ENCODE measurements at regions of chr3 and their contacts with region 1.

Region 1: GRCh38 chr3:169420429-169420828 is 243.1 kb downstream of the MECOM start:
- DNase-seq: no peak
- H3K4me3 ChIP-seq: no peak overlapping the region
- H3K27ac ChIP-seq: no peak overlapping the region
- H3K4me1 ChIP-seq: no peaks in the 10 kb centered on the region
- H3K27me3 ChIP-seq: no peaks in the 10 kb centered on the region
- CTCF ChIP-seq: no peak

Region 2: DNA sequence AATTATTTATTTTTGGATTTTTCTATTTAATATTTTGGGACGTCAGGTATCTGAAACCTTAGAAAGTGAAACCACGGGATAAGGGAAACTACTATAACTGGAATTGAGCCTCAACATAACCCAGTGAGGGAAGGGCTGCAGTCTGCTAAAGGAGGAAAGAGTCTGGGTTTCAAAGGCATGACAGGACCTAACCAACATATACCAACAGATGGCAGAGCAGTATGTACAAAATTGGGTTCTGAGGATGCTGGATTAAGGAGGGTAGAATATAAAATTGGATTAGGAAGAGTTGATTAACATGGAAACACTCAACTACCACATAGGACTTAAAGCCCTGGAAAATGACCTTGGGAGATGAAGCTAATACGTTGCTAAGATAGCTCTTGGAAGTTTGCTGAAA is 360.4 kb before region 1 on chr3:
- CTCF ChIA-PET with region 1: no interaction called
- dilution Hi-C with region 1: no loop called
- in situ Hi-C with region 1: no loop called
- intact Hi-C with region 1: no loop called
- DNase-seq: no peak
- H3K4me3 ChIP-seq: no peak overlapping the region
- H3K27ac ChIP-seq: no peak overlapping the region
- H3K4me1 ChIP-seq: peaks cover 13% of the 10 kb centered on the region
- H3K27me3 ChIP-seq: no peaks in the 10 kb centered on the region
- CTCF ChIP-seq: peak in 1 of 2 donors; percentile 41

Region 3: DNA sequence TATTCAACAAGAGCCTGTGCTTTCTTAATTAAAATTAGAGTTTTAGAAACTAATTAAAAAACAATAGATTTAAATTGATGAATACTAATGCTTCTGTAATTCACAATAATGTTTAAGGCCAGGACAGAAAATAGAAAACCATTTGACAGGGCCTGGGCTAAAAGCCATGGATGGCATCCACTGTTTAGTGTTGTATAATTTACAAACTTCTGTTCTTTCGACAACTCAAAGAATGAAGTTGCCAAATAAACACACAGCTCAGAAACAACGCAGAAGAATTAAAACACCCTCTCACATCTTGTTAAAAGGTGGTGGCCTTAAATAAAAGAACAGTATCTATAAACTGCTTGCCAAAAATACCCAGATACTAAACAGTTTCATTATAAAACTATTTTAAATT is 104.4 kb before region 1 on chr3:
- CTCF ChIA-PET with region 1: interaction called, 11 read pairs
- dilution Hi-C with region 1: no loop called
- in situ Hi-C with region 1: no loop called
- intact Hi-C with region 1: no loop called
- DNase-seq: no peak
- H3K4me3 ChIP-seq: no peak overlapping the region
- H3K27ac ChIP-seq: no peak overlapping the region
- H3K4me1 ChIP-seq: no peaks in the 10 kb centered on the region
- H3K27me3 ChIP-seq: no peaks in the 10 kb centered on the region
- CTCF ChIP-seq: no peak

Measured in mammary epithelial cell (primary cell).